HAP-1 (cell line): ENCODE measurements at regions of chr1 and their contacts with region 1.

Region 1: DNA sequence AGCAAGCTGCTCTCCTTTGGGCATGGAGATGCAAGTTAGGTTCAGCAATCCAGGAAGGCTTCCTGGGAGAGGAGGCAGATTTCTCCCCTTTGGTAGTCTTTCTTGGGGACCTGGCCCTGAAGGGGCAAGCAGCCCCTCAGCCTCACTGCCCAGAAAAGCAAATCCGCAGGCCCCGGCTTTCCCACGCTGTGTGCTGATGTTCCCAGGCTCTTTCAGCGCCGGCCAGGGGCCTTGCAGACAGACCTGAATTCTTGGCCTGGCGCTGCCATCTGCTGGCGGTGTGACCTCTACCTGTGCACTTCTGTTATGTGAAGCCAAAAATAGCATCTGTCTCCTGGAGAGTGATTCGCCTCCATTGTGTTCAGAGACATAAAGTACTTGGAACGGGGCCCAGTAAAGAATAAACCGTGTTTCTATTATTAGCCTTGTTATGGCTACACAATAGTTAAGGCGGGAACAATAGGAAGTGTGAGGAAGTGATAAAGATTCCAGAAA is 64.8 kb downstream of the ALPL start:
- DNase-seq: peak; percentile 87 to 95
- H3K4me3 ChIP-seq: no peak overlapping the region
- H3K4me1 ChIP-seq: peaks cover 14% of the 10 kb centered on the region
- H3K27me3 ChIP-seq: no peaks in the 10 kb centered on the region

Region 2: DNA sequence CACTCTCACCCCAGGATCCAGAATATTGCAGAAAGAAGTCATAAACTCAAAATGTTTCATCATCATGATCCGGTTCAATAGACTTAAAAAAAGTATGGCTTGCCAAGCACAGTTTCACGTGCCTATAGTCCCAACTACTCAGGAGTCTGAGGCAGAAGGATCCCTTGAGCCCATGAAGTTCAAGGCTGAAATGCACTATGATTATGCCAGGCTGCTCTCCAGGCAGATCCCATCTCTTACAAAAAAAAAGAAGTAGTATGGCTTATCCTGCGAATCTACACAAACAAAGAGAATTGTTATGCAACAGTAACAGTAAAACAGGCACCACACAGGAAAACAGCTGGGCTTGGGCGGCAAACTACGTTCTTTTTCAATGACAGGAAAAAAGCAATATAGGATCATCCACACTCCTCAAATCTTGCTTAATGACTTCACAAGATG is 473.5 kb before region 1 on chr1:
- in situ Hi-C with region 1: no loop called
- DNase-seq: peak; percentile 28 to 51
- H3K4me3 ChIP-seq: no peak overlapping the region
- H3K4me1 ChIP-seq: peaks cover 14% of the 10 kb centered on the region
- H3K27me3 ChIP-seq: no peaks in the 10 kb centered on the region

Region 3: GRCh38 chr1:21378705-21379494 is 195.1 kb before region 1 on chr1:
- in situ Hi-C with region 1: loop called (anchors 10 kb)
- DNase-seq: no peak
- H3K4me3 ChIP-seq: no peak overlapping the region
- H3K4me1 ChIP-seq: no peaks in the 10 kb centered on the region
- H3K27me3 ChIP-seq: no peaks in the 10 kb centered on the region

Region 4: DNA sequence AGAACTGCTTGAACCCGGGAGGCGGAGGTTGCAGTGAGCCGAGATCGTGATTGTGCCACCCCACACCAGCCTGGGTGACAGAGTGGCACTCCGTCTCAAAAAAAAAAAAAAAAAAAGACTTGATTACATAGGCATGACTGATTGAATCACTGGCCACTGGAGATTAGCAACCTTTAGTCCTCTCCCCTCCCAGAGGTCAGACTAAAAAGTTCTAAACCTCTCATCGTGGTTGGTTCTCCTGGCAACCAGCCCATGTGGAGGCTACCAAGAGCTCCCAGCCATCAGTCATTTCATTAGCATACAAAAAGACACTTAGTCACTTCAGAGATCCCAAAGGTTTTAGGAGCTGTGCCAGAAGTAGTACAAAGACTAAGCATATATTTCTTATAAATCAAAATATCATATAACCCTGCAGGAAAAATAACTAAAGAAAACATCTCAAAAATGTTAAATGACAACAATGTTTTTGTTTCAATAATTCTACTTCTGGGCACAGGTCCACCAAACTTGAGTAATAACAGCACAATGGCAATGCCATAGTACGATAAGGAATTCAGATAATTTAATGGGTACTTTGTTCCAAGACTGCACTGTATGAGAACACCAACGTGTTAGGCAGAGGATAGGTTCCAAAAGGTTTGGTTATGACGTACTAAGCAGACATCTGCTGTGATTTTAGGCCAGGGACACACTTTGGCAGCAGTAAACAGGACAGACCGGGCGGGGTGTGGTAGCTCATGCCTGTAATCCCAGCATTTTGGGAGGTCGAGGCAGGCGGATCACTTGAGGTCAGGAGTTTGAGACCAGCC is 190.8 kb after region 1 on chr1:
- in situ Hi-C with region 1: no loop called
- DNase-seq: peak; percentile 92 to 96
- H3K4me3 ChIP-seq: no peak overlapping the region
- H3K4me1 ChIP-seq: peaks cover 31% of the 10 kb centered on the region
- H3K27me3 ChIP-seq: no peaks in the 10 kb centered on the region